Sigmoid colon (tissue), 7 donors: ENCODE measurements at regions of chr10 and their contacts with region 1.

Region 1: DNA sequence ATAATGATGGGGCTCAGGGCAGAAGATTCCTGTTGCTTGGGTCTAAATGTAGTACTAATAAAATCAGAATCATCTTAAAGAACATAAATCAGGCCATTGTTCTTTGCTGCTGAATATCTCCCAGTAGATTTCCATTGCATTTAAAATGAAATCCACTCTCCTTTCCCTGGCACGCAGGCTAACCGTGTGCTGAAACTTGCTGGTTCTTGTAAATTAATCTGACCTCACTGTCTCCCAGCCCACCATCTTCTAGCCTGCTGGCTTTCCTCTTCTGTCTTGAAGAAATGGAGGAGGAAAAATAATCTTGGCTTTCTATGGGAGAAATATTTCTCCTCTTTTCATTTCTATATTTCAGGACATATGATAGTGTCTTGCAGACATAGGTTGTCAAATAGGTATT is 1396.9 kb downstream of the GATA3 start:
- DNase-seq: no peak
- H3K4me3 ChIP-seq: no peak overlapping the region
- H3K27ac ChIP-seq: peak overlapping the region in 3 of 4 donors; percentile 14 to 71 (median 30)
- H3K4me1 ChIP-seq: peaks cover 0 to 35% (median 26%) of the 10 kb centered on the region in 4 donors
- H3K27me3 ChIP-seq: no peaks in the 10 kb centered on the region
- CTCF ChIP-seq: no peak
- EP300 ChIP-seq: no peak
- POLR2A ChIP-seq: no peak

Region 2: DNA sequence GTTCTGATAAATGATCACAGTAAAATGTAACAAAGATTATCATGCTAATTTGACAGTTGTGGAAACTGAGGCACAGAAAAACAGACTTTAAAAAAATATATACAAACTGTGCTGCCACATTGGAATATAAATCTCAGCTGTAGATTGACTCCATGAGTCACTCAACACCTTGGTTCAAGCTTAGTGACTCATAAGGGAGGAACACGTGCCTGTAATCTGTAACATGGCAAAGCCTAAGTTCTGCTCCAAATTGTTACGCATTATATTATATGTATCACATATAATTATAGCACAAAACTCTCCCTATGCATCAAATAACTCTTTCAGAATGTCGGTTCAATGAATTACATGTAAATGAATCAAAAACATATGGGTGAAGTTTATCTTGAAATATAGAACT is 349.3 kb before region 1 on chr10:
- intact Hi-C with region 1: no loop called
- DNase-seq: no peak
- H3K4me3 ChIP-seq: no peak overlapping the region
- H3K27ac ChIP-seq: no peak overlapping the region
- H3K4me1 ChIP-seq: no peaks in the 10 kb centered on the region
- H3K27me3 ChIP-seq: no peaks in the 10 kb centered on the region
- CTCF ChIP-seq: no peak
- EP300 ChIP-seq: no peak
- POLR2A ChIP-seq: no peak

Region 3: DNA sequence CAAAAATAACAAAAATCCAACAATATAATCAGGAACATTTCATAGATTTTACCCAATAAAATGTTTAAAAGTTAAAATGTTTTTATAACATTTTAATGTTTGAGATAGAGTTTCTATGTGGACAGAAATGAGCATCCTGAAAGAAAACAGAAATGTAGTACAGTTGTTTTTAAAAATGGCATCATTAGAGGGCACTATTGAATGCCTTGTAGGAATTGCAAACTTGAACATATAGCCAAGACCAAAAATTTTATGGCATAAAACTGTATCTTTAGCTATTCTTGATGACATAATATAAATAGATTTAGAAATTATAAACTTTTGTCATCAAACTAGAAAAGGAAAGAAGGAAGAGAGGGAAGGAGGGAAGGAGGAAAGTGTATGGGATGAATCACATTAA is 24.2 kb before region 1 on chr10:
- intact Hi-C with region 1: loop called (anchors 2 kb)
- DNase-seq: no peak
- H3K4me3 ChIP-seq: no peak overlapping the region
- H3K27ac ChIP-seq: no peak overlapping the region
- H3K4me1 ChIP-seq: peaks cover 0 to 7% (median 0%) of the 10 kb centered on the region in 4 donors
- H3K27me3 ChIP-seq: no peaks in the 10 kb centered on the region
- CTCF ChIP-seq: no peak
- EP300 ChIP-seq: no peak
- POLR2A ChIP-seq: no peak